ENCODE measurements at regions of chr18 and their contacts with region 1.

Region 1: GRCh38 chr18:23964282-23965238 is 50.0 kb upstream of the TTC39C start:
- DNase-seq: no peak
- ATAC-seq: peak; percentile 52; the same call in 1 of the 2 replicates
- H3K4me3 Mint-ChIP-seq: no peak overlapping the region
- H3K27ac Mint-ChIP-seq: no peak overlapping the region
- H3K4me1 Mint-ChIP-seq: peaks cover 18% of the 10 kb centered on the region
- H3K27me3 Mint-ChIP-seq: no peaks in the 10 kb centered on the region; the same call in 1 of the 2 replicates
- CTCF ChIP-seq: no peak

Region 2: DNA sequence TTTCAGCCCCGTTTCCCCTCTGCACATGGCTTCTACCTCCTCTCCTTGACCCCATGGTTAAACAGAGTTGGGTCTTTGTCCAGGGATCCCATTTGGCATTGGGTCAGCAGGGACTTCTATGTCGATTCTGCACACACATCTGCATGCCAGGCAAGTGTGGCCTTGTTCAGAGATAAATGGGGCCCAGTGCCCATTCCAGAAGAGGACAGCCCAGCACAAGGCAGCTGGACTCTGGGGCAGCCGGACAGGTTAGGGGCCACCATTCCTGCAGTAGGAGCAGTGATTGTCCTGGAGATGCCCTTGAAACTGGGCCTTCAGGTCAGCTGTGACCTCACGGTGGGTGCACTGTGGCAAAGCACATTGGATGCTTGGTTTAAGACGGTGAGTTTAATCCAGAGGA is 816.2 kb before region 1 on chr18:
- CTCF ChIA-PET with region 1: no interaction called
- POLR2A ChIA-PET with region 1: interaction called, 15 read pairs
- DNase-seq: no peak
- ATAC-seq: no peak
- H3K4me3 Mint-ChIP-seq: no peak overlapping the region
- H3K27ac Mint-ChIP-seq: no peak overlapping the region
- H3K4me1 Mint-ChIP-seq: peaks cover 43% of the 10 kb centered on the region
- H3K27me3 Mint-ChIP-seq: no peaks in the 10 kb centered on the region
- CTCF ChIP-seq: no peak

Region 3: DNA sequence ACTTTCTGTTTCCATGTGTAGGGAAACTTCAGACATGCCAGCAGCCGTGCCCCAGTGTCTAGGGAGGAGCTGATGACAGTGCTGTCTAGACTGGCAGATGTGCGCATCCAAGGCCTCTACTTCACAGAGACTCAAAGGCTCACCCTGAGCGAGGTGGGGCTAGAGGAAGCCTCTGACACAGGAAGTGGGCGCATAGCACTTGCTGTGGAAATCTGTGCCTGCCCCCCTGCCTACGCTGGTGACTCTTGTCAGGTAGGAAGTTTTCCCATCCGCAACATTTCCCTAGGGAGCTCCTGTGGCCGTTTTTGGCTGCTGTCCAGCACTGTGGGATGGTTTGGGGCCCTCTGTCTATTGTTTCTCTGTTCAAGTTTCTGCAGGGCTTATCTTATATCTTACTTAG is 93.2 kb before region 1 on chr18:
- CTCF ChIA-PET with region 1: no interaction called
- POLR2A ChIA-PET with region 1: no interaction called
- DNase-seq: no peak
- ATAC-seq: peak; percentile 45
- H3K4me3 Mint-ChIP-seq: no peak overlapping the region
- H3K27ac Mint-ChIP-seq: no peak overlapping the region
- H3K4me1 Mint-ChIP-seq: peaks cover 25% of the 10 kb centered on the region
- H3K27me3 Mint-ChIP-seq: no peaks in the 10 kb centered on the region
- CTCF ChIP-seq: no peak